ENCODE measurements at regions of chr11 and their contacts with region 1.

Region 1: DNA sequence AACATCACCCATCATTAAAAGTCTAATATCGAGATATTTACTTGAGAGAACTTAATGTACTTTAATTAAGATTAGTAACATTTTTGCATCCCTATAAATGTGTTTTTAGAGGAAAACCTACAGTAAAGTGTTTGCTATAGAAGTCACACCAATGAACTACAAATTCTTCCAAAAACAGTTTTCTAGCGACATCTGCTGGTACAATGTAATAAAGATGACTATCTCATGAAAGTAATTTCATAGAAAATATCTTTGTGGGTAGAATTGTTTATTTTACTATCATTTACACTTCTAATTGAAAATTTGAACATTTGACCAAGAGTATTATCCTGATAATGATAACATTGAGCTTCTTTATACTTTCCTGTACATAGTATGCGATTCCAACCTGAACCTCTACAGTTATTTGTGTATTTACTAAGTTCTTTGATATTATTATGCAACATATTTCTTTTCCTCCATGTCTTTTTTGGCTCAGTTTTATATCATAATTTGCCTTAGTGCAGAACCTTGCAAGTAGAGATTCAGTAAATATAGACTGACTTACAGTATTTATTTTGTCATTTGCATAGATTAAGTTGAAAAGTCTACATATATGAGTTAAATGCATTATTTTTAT is 252.7 kb downstream of the TMEM135 start:
- DNase-seq: peak; percentile 36
- H3K4me3 ChIP-seq: no peak overlapping the region
- H3K27ac ChIP-seq: no peak overlapping the region
- H3K4me1 ChIP-seq: no peaks in the 10 kb centered on the region
- H3K27me3 ChIP-seq: no peaks in the 10 kb centered on the region
- CTCF ChIP-seq: peak; percentile 50 to 58

Region 2: GRCh38 chr11:86869966-86870570 is 420.3 kb before region 1 on chr11:
- CTCF ChIA-PET with region 1: no interaction called
- dilution Hi-C with region 1: no loop called
- in situ Hi-C with region 1: no loop called
- intact Hi-C with region 1: loop called (anchors 2 kb)
- DNase-seq: peak; percentile 19
- H3K4me3 ChIP-seq: no peak overlapping the region
- H3K27ac ChIP-seq: no peak overlapping the region
- H3K4me1 ChIP-seq: peaks cover 6% of the 10 kb centered on the region
- H3K27me3 ChIP-seq: no peaks in the 10 kb centered on the region
- CTCF ChIP-seq: peak; percentile 83 to 86

Region 3: GRCh38 chr11:86938900-86939880 is 351.2 kb before region 1 on chr11:
- CTCF ChIA-PET with region 1: no interaction called
- dilution Hi-C with region 1: loop called (anchors 25 kb)
- in situ Hi-C with region 1: loop called in 1 of 2 experiments (anchors 10 kb)
- intact Hi-C with region 1: loop called (anchors 1 kb)
- DNase-seq: peak; percentile 31
- H3K4me3 ChIP-seq: no peak overlapping the region
- H3K27ac ChIP-seq: no peak overlapping the region
- H3K4me1 ChIP-seq: no peaks in the 10 kb centered on the region
- H3K27me3 ChIP-seq: no peaks in the 10 kb centered on the region
- CTCF ChIP-seq: peak; percentile 59 to 60

Region 4: DNA sequence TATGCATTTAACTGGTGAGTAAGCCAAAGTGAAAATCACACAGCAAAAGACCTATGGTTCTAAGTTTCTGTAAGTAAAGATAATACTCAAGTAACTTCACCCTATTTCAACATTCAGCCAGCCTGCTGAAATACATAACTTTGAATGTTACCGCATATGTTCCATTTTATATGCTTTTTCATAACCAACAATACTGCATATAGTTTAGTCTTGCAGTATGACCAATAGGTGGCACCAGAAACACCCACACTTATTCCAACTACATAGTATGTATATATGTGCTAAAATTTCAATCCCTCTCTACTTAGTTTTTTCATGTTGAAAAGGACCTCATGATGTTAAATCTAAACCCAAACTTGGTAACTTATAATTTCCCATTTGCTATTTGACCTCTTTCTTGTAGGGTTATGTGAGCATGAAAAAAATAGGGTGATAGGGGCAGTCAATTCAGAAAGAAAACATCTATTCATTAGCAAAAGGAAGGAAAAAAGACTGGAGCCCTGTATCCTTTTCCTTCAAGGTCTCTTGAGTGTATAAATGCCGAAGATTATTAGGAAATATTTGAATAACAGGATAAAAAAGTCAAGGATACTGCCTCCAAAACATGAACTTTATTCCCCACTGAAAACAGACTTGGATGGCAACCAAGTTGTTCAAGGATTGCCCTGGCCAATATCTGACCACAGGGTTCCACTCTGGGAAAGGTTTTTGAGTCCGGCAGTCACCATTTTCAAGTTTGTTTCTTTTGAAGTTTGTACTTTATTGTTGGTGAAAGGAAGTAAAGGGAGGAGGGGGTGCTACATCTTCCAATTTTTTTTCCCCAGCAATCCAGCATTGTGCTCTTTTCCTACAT is 311.4 kb before region 1 on chr11:
- CTCF ChIA-PET with region 1: no interaction called
- dilution Hi-C with region 1: no loop called
- in situ Hi-C with region 1: no loop called
- intact Hi-C with region 1: loop called (anchors 1 kb)
- DNase-seq: peak; percentile 36
- H3K4me3 ChIP-seq: no peak overlapping the region
- H3K27ac ChIP-seq: no peak overlapping the region
- H3K4me1 ChIP-seq: peaks cover 6% of the 10 kb centered on the region
- H3K27me3 ChIP-seq: no peaks in the 10 kb centered on the region
- CTCF ChIP-seq: peak; percentile 74 to 80

Region 5: GRCh38 chr11:86990515-86990914 is 299.9 kb before region 1 on chr11:
- CTCF ChIA-PET with region 1: no interaction called
- dilution Hi-C with region 1: no loop called
- in situ Hi-C with region 1: no loop called
- intact Hi-C with region 1: loop called (anchors 1 kb)
- DNase-seq: peak; percentile 83
- H3K4me3 ChIP-seq: no peak overlapping the region
- H3K27ac ChIP-seq: no peak overlapping the region
- H3K4me1 ChIP-seq: peaks cover 10% of the 10 kb centered on the region
- H3K27me3 ChIP-seq: no peaks in the 10 kb centered on the region
- CTCF ChIP-seq: no peak

Region 6: DNA sequence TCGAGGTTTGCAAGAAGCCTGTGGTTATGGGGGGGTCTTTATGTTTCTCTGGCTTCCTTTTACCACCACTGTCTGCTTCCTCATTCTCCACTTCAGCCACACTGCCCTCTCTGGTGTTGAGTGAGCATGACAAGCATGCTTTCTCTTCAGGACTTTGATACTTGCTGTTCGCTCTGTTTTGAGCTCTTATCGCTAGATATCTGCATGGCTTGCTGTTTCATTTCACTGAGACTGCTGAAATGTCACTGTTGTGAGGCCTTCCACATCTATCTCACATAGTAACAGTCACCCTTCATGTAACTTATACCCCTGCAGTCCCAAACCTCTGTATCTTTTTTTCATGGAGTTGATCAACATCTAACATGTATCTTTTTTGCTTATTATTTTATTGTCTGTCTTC is 192.8 kb before region 1 on chr11:
- CTCF ChIA-PET with region 1: no interaction called
- dilution Hi-C with region 1: no loop called
- in situ Hi-C with region 1: no loop called
- intact Hi-C with region 1: loop called (anchors 2 kb)
- DNase-seq: peak; percentile 22
- H3K4me3 ChIP-seq: no peak overlapping the region
- H3K27ac ChIP-seq: no peak overlapping the region
- H3K4me1 ChIP-seq: no peaks in the 10 kb centered on the region
- H3K27me3 ChIP-seq: no peaks in the 10 kb centered on the region
- CTCF ChIP-seq: peak; percentile 80 to 81

Region 7: DNA sequence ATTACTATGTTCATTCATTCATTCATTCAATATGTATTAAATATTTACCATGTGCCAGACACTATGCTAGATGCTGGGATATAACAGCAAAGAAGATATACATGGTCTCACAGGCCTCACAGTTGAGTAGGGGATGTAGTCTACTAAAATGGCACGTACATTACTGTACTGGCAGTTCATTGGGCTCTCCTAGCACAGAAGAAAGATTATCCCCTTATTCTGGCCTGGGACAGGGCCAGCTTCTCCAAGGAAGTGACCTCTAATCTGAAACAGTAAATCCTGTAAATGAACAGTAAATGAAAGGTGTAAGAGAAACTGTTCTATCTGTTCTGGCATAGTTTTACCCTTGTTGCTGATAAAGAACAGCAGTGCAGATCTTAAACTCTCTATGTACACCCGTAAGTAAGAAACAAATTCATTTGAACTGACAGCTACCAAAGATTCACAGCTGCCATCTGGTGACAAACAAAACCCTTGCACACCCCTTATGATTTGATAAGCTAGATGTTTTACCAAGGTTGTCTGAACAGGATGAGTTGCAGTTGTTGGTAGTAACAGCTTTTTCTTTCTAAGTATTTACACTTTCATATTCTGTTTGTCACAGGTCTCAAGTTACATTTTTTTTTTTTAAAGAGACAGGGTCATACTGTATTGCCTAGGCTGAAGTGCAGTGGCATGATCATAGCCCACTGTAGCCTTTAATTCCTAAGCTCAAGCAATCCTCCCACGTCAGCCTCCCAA is 10.4 kb after region 1 on chr11:
- CTCF ChIA-PET with region 1: no interaction called
- dilution Hi-C with region 1: no loop called
- in situ Hi-C with region 1: no loop called
- intact Hi-C with region 1: no loop called
- DNase-seq: no peak
- H3K4me3 ChIP-seq: no peak overlapping the region
- H3K27ac ChIP-seq: no peak overlapping the region
- H3K4me1 ChIP-seq: no peaks in the 10 kb centered on the region
- H3K27me3 ChIP-seq: no peaks in the 10 kb centered on the region
- CTCF ChIP-seq: no peak

Measured in mammary epithelial cell (primary cell).